OCI-LY7 (cell line): ENCODE measurements at regions of chr11 and their contacts with region 1.

Region 1: DNA sequence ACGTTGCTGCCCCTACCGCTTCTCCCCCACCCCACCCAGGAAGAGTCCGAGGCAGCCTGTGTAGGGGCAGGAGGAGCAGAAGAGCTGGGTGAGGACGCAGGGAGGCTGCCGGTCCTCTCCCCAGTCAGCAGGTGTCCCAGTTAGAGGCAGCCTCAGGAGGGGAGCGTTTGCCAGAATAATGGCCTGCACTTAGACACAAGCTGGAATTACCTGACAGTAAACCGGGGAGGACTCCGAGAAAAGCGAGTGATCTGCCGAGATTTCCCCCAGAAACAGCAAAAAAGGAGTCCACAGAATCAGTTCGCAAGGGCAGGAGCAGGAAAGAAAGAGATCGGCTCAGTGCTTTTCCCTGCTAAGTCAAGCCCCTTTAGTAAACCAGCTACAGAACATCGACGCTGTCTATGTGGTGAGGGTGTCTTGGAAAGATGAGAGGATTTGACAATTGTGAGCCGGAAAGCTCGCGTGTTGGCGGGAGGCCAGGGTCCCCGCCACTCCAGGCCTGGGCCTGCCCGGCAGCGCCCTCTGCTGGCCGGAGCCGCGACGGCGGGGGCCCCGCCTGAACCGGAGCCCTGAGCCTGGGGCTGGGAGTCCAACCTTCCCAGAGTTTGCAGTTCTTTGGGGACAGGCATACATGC is 17.7 kb upstream of the THRSP start:
- DNase-seq: peak; percentile 68
- H3K4me3 ChIP-seq: no peak overlapping the region
- H3K27ac ChIP-seq: no peak overlapping the region
- H3K4me1 ChIP-seq: peaks cover 3% of the 10 kb centered on the region
- CTCF ChIP-seq: peak; percentile 99

Region 2: DNA sequence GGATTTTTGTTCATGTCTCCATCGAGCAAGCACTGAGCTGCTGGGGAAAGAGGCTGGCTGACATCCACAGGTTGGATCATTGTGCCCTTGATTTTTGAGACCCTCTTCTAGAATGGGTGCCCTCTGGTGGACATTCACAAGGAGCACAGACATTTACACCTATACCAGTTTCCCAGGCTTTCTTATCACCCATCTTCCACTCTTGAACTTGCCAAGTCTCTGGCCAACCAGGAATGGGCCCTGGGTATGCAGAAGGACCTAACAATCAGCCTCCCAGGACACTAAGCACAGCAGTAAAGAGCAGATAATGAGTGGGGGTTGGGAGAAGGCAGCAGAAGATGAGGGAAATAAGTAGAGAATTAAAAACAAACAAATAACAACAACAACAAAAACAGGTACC is 45.8 kb before region 1 on chr11:
- CTCF ChIA-PET with region 1: interaction called, 4 read pairs
- POLR2A ChIA-PET with region 1: no interaction called
- intact Hi-C with region 1: loop called (anchors 5 kb)
- DNase-seq: peak; percentile 83
- H3K4me3 ChIP-seq: no peak overlapping the region
- H3K27ac ChIP-seq: peak overlapping the region; percentile 91
- H3K4me1 ChIP-seq: peaks cover 32% of the 10 kb centered on the region
- CTCF ChIP-seq: peak; percentile 88

Region 3: DNA sequence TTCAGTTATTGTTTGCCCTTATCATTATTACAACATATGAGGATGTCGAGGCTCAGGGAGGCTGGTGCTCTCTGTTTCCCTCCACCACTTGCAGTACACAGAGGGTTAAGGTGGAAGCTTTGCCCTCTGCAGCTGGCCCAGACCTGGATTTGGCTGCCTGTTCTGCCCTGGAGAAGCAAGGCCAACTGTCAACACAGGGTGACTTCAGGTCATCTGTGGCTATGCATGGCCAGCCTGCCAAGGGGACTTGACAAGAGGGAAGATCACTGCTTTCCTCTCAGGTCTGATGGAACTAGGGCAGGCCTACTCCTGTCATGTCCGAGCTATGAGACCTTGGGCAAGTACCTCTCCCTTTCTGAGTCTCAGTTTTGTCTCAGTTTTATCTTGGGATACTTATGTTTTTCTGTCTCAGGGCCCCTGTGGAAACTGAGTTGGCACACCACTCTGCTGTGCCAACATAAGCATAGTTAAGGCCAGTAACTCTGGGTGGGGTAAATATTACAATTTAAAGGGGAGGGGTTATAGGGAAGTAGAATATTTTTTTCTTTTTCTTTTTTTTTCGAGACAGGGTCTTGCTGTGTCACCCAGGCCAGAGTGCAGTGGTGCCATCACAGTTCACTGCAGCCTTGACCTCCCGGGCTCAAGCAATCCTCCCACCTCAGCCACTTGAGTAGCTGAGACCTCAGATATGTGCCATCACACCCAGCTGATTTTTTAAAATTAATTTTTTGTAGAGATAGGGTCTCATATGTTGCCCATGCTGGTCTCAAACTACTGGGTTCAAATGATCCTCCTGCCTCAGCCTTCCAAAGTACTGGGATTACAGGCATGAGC is 15.3 kb after region 1 on chr11:
- CTCF ChIA-PET with region 1: no interaction called
- POLR2A ChIA-PET with region 1: no interaction called
- intact Hi-C with region 1: no loop called
- DNase-seq: no peak
- H3K4me3 ChIP-seq: no peak overlapping the region
- H3K27ac ChIP-seq: no peak overlapping the region
- H3K4me1 ChIP-seq: no peaks in the 10 kb centered on the region
- CTCF ChIP-seq: no peak

Region 4: GRCh38 chr11:78079232-78080083 is 33.5 kb after region 1 on chr11 and contains the start of gene NDUFC2:
- CTCF ChIA-PET with region 1: no interaction called
- POLR2A ChIA-PET with region 1: no interaction called
- intact Hi-C with region 1: no loop called
- DNase-seq: peak; percentile 69
- H3K4me3 ChIP-seq: peak within 1 kb of the TSS; percentile 83
- H3K27ac ChIP-seq: no peak within 1 kb of the TSS
- H3K4me1 ChIP-seq: peaks cover 10% of the 10 kb centered on the region
- CTCF ChIP-seq: no peak
- total RNA-seq, gene NDUFC2: 21.6 and 53.3 TPM in 2 replicates